B cell (primary cell): ENCODE measurements at regions of chr12 and their contacts with region 1.

Region 1: DNA sequence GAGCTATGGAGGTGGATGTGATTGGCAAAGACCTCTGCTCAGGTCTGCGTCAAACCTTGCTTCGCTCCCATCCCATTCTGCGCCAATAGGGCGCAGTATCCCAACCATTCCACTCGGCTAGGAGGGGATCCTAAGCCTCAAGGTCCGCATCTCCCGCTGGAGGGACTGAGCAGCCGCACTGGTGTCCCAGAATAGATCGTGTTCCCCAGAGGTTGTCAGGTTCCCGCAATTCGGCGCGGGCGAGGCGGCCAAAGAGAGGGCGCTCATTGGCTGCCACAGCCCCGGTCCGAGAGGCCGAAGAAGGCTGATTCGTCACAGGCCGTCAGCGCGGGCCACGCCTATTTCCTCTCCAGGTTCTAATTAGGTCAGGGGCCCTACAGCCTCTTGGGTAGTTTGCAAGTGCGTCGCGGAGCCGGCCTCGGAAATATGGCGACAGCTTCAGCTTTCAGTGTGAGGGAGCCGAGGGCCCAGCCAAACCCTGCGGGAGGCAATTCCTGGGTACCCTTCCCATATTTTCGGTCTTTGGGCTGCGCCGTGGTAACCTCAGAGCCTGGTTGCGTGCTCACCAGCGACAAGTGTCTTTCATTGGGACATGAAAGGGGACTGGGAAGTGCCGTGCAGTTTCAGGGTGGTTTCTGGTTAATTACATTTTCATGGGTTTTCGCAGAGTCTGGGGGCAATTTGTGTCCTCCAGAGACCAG is 5.0 kb downstream of the OR10AD1 start:
- DNase-seq: peak; percentile 95
- ATAC-seq: peak; percentile 99
- H3K4me3 ChIP-seq: peak overlapping the region; percentile 76 to 100 (median 96)
- H3K4me3 Mint-ChIP-seq: peak overlapping the region; percentile 87
- H3K27ac ChIP-seq: peak overlapping the region; percentile 97 to 98
- H3K27ac Mint-ChIP-seq: peak overlapping the region; percentile 99
- H3K4me1 ChIP-seq: peaks cover 18 to 20% of the 10 kb centered on the region in 2 donors
- H3K4me1 Mint-ChIP-seq: peaks cover 23% of the 10 kb centered on the region
- H3K27me3 ChIP-seq: peaks cover 0 to 12% (median 0%) of the 10 kb centered on the region in 4 experiments
- H3K27me3 Mint-ChIP-seq: peaks cover 18% of the 10 kb centered on the region
- CTCF ChIP-seq: no peak

Region 2: DNA sequence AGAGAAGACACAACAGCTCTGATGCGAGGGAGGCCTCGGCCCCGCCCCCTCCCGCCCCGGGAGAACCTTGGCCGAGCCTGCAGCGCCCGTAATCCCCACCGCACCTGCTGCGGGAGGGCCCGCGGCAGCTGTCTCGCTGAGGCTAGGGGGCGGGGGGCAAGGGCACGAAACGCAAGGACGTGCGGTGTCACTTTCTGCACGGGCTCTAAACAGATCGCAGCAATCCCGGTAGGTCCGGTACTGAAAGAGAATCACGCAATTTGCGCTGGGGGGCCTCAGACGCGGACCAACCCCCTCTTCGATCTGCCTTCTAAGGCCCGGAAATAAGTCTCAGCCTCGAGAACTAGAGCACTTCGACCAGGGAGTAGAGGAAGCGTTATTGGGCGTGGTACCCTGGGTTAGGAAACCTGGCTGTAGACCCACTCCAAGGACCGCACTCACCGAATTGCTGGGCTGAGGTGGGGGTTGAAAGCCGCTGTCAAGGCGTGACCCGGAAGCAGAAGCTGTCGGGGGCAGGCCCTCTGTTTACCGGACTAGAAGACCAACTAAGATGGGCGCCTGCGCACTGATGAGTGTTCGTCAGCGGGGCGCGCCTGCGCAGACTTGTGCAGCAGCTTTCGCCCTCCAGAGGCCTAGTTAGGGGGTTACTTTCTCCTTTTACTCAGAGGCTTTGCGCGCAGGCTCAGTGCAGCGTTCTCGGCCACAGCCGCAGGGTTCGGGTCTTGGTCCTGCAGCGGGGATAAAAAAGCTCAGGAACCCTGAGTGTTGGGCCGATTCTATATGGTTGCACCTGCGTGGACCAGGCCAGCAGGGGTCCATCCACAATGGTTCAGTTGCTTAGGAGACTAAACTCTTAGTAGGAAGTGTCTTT is 40.9 kb before region 1 on chr12 and contains the start of gene ASB8:
- CTCF ChIA-PET with region 1: interaction called, 8 read pairs
- POLR2A ChIA-PET with region 1: interaction called, 4 read pairs
- intact Hi-C with region 1: loop called (anchors 1 kb)
- DNase-seq: peak; percentile 99
- ATAC-seq: peak; percentile 91
- H3K4me3 ChIP-seq: peak within 1 kb of the TSS; percentile 81 to 98 (median 88)
- H3K4me3 Mint-ChIP-seq: peak within 1 kb of the TSS; percentile 99
- H3K27ac ChIP-seq: peak within 1 kb of the TSS; percentile 67 to 84
- H3K27ac Mint-ChIP-seq: peak within 1 kb of the TSS; percentile 99
- H3K4me1 ChIP-seq: peaks cover 14 to 15% of the 10 kb centered on the region in 2 donors
- H3K4me1 Mint-ChIP-seq: peaks cover 21% of the 10 kb centered on the region
- H3K27me3 ChIP-seq: no peaks in the 10 kb centered on the region
- H3K27me3 Mint-ChIP-seq: no peaks in the 10 kb centered on the region
- CTCF ChIP-seq: peak; percentile 64
- total RNA-seq, gene ASB8: 53.2 and 54.8 TPM in 2 replicates

Region 3: GRCh38 chr12:48183091-48183875 is 14.8 kb before region 1 on chr12 and contains the start of gene CCDC184:
- CTCF ChIA-PET with region 1: interaction called, 35 read pairs
- POLR2A ChIA-PET with region 1: interaction called, 5 read pairs
- intact Hi-C with region 1: loop called (anchors 1 kb)
- DNase-seq: peak; percentile 89
- ATAC-seq: peak; percentile 75
- H3K4me3 ChIP-seq: peak within 1 kb of the TSS; percentile 69 to 90 (median 77)
- H3K4me3 Mint-ChIP-seq: peak within 1 kb of the TSS; percentile 98
- H3K27ac ChIP-seq: peak within 1 kb of the TSS in 1 of 2 donors; percentile 11
- H3K27ac Mint-ChIP-seq: peak within 1 kb of the TSS; percentile 84
- H3K4me1 ChIP-seq: peaks cover 27 to 29% of the 10 kb centered on the region in 2 donors
- H3K4me1 Mint-ChIP-seq: peaks cover 28% of the 10 kb centered on the region
- H3K27me3 ChIP-seq: peaks cover 0 to 38% (median 15%) of the 10 kb centered on the region in 4 experiments
- H3K27me3 Mint-ChIP-seq: peaks cover 37% of the 10 kb centered on the region
- CTCF ChIP-seq: peak; percentile 45
- total RNA-seq, gene CCDC184: 0.54 and 0.66 TPM in 2 replicates

Region 4: DNA sequence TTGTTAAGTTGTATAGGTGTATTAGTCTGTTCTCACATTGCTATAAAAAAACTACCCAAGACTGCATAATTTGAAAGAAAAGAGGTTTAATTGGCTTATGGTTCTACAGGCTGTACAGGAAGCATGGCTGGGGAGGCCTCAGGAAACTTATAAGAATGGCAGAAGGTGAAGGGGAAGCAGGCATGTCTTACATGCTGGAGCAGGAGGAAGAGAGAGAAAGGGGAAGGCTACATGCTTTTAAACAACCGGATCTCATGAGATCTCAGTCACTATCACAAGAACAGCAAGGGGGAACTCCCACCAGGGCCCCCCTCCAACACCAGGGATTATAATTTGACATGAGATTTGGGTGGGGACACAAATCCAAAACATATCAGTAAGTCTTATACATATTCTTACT is 65.5 kb after region 1 on chr12:
- CTCF ChIA-PET with region 1: no interaction called
- POLR2A ChIA-PET with region 1: no interaction called
- intact Hi-C with region 1: no loop called
- DNase-seq: peak; percentile 13
- ATAC-seq: no peak
- H3K4me3 ChIP-seq: no peak overlapping the region
- H3K4me3 Mint-ChIP-seq: no peak overlapping the region
- H3K27ac ChIP-seq: no peak overlapping the region
- H3K27ac Mint-ChIP-seq: no peak overlapping the region
- H3K4me1 ChIP-seq: peaks cover 3 to 22% of the 10 kb centered on the region in 2 donors
- H3K4me1 Mint-ChIP-seq: peaks cover 25% of the 10 kb centered on the region
- H3K27me3 ChIP-seq: no peaks in the 10 kb centered on the region
- H3K27me3 Mint-ChIP-seq: peaks cover under 1% of the 10 kb centered on the region
- CTCF ChIP-seq: no peak

Region 5: DNA sequence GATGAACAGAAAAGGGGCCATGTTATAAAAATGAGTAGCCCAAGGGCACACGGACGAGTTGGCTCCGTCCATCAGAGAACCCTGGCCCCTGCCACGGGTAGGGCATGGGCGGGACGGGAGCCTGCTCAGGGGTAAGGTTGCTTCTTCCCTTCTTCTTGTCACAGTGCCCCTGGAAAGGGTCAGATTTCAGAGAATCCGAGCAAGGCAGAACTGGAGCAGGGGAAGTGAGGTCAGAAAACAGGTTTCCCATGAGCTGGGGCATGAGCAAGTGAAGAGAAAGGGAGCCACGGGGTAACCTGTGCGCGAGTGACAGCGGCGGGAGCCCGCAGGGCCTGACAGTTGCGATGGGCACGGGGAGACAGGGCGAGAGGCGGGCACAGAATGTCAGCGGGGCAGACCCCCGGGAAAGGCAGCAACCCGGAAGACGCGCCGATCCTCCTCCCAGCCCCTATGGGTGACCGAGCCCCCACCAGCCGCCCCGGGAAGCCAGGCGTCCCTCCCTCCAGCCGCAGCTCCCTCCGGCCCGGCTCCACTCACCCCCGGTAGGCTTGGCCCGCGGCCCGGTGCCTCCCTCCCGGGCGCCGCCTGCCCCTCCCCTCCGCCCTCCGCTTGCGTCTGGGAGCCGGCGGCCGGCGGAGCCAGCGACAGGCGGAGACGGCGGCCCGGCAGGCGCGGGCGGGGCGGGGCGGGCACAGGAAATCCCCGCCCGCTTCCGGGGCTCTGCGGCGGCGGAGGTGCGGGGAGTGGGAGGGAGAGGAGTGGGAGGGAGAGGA is 152.3 kb after region 1 on chr12 and contains the start of gene ZNF641:
- CTCF ChIA-PET with region 1: no interaction called
- POLR2A ChIA-PET with region 1: no interaction called
- intact Hi-C with region 1: loop called (anchors 1 kb)
- DNase-seq: peak; percentile 85
- ATAC-seq: peak; percentile 90
- H3K4me3 ChIP-seq: peak within 1 kb of the TSS; percentile 71 to 87 (median 82)
- H3K4me3 Mint-ChIP-seq: peak within 1 kb of the TSS; percentile 97
- H3K27ac ChIP-seq: peak within 1 kb of the TSS; percentile 60 to 85
- H3K27ac Mint-ChIP-seq: peak within 1 kb of the TSS; percentile 96
- H3K4me1 ChIP-seq: peaks cover 7 to 15% of the 10 kb centered on the region in 2 donors
- H3K4me1 Mint-ChIP-seq: peaks cover 22% of the 10 kb centered on the region
- H3K27me3 ChIP-seq: no peaks in the 10 kb centered on the region
- H3K27me3 Mint-ChIP-seq: no peaks in the 10 kb centered on the region
- CTCF ChIP-seq: no peak
- total RNA-seq, gene ZNF641: 29.7 and 34.2 TPM in 2 replicates